ENCODE measurements at regions of chr2 and their contacts with region 1.

Region 1: DNA sequence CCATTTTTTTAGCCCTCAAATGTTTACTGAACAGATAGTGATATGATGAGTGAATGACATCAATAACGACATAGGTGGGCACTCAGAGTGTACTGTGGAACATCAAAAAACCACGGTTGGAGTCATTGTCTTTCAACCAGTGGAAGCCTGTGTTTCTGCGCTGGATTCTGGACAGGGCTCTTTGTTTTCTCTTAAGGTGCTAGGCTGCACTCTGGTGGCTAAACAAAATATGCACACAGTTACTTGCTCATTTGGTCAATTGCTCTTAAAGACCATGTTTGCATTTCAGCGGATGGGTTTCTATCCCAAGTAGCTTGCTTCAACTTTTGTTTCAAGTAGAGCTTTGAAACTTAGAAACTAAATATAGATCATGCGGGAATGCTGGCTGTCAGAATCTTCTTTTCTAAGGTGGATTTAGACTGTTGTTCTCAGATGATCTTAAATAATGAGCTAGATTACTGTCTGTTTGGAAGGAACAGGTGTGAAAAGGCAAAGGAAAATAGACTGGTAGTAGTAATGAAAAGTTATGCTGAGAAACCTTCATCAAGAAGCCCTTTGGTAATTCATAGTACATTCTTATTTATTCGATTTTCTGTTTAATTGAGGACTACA is 48.5 kb upstream of the LYPD6B start:
- DNase-seq: peak; percentile 75
- H3K4me3 ChIP-seq: no peak overlapping the region
- H3K27ac ChIP-seq: no peak overlapping the region
- H3K4me1 ChIP-seq: no peaks in the 10 kb centered on the region
- H3K27me3 ChIP-seq: no peaks in the 10 kb centered on the region
- CTCF ChIP-seq: peak; percentile 55 to 59
- POLR2A ChIP-seq: no peak

Region 2: GRCh38 chr2:147937744-147938349 is 1052.1 kb before region 1 on chr2:
- CTCF ChIA-PET with region 1: interaction called, 17 read pairs
- POLR2A ChIA-PET with region 1: no interaction called
- dilution Hi-C with region 1: no loop called
- intact Hi-C with region 1: loop called (anchors 1 kb)
- DNase-seq: peak; percentile 36
- H3K4me3 ChIP-seq: no peak overlapping the region
- H3K27ac ChIP-seq: no peak overlapping the region
- H3K4me1 ChIP-seq: no peaks in the 10 kb centered on the region
- H3K27me3 ChIP-seq: no peaks in the 10 kb centered on the region
- CTCF ChIP-seq: peak; percentile 51 to 69
- POLR2A ChIP-seq: no peak

Region 3: GRCh38 chr2:147989809-147990403 is 1000.1 kb before region 1 on chr2:
- CTCF ChIA-PET with region 1: interaction called, 36 read pairs
- POLR2A ChIA-PET with region 1: no interaction called
- dilution Hi-C with region 1: no loop called
- intact Hi-C with region 1: loop called (anchors 1 kb)
- DNase-seq: peak; percentile 66
- H3K4me3 ChIP-seq: no peak overlapping the region
- H3K27ac ChIP-seq: no peak overlapping the region
- H3K4me1 ChIP-seq: no peaks in the 10 kb centered on the region
- H3K27me3 ChIP-seq: no peaks in the 10 kb centered on the region
- CTCF ChIP-seq: peak; percentile 32 to 44
- POLR2A ChIP-seq: no peak

Region 4: DNA sequence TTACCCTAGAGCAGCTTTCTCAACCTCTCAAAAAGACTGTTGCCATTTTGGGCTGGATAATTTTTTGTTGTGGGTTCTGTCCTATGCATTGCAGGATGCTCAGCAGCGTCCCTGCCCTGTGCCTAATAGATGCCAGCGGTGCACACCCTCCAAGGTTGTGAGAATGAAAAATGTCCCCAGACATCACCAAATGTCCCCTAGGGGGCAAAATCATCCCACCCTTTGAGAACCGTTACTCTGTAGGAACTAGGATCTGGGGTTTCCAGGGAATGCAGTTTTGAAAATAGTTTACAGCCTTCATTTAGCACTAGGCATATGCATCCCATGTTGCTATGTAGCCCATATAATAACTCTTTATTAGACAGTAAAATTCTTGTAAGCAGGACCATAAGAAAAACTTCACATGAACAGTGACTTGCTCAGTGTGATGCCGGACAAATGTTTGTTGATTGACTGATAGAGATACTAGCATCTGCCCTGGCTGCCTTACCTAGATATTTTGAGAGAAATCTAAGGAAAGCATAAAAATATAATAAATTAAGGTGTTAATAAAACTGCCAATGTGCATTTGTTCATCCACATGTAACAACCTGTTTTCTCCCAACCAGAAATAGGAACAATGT is 424.6 kb before region 1 on chr2:
- CTCF ChIA-PET with region 1: interaction called, 13 read pairs
- POLR2A ChIA-PET with region 1: no interaction called
- dilution Hi-C with region 1: no loop called
- intact Hi-C with region 1: loop called (anchors 1 kb)
- DNase-seq: peak; percentile 12
- H3K4me3 ChIP-seq: no peak overlapping the region
- H3K27ac ChIP-seq: no peak overlapping the region
- H3K4me1 ChIP-seq: peaks cover 2% of the 10 kb centered on the region
- H3K27me3 ChIP-seq: peaks cover 0 to 3% of the 10 kb centered on the region in 2 experiments
- CTCF ChIP-seq: peak; percentile 16 to 35
- POLR2A ChIP-seq: no peak

Region 5: DNA sequence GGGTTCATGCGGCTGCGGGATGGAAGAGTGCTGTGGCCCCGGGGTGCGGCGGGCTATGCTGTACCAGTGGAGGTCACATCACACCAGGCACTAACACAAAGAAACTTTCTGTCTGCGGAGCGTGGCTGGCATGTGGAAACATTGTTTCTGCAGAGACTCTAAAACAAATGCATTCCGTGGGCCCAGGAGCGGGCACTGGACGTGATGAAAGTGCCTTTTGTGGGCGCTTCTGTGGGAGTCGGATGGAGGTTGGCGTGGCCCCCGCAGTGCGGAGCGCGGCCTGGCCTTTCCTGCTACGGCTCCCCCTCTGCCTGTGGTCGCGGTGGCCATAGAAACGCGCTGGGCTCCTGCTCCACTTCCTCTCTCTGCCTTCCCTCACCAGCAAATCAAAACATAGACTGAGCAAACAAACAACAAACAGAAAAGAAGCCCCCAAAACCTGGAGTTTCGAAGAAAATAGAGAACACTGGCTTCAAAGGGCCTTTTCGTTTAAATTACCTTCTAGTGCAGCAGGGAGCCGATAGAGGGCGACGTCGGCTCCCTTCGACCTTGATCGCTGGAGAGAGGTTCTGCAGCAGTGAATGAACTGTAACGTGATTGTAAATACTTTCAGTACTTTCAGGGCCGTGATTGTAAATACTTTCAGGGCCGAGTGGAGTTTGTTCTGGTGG is 63.6 kb before region 1 on chr2:
- CTCF ChIA-PET with region 1: interaction called, 4 read pairs
- POLR2A ChIA-PET with region 1: no interaction called
- dilution Hi-C with region 1: no loop called
- intact Hi-C with region 1: loop called (anchors 2 kb)
- DNase-seq: peak; percentile 58
- H3K4me3 ChIP-seq: no peak overlapping the region
- H3K27ac ChIP-seq: no peak overlapping the region
- H3K4me1 ChIP-seq: no peaks in the 10 kb centered on the region
- H3K27me3 ChIP-seq: no peaks in the 10 kb centered on the region
- CTCF ChIP-seq: peak; percentile 74 to 75
- POLR2A ChIP-seq: no peak

Measured in endothelial cell of umbilical vein (primary cell).